ENCODE measurements at regions of chr7 and their contacts with region 1.

Region 1: DNA sequence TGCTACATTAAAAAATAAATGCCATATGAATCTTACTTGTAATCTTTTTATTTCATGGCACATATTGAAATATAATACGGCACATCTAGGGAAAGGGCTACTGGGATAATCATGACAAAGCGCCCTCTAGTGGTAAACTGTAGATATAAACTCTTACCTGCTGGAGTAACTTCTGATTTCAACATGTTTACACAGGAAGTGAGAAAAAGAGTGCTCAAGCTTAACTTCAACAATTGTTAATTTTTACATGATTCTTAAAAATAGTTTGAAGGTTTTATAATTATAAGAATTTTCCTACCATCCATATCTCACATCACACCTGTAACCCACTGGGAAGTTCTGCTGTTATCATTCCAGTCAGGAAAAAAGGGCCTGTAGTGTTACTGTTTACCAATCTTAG is 2.0 kb upstream of the HEPACAM2 start:
- H3K4me3 ChIP-seq: no peak overlapping the region
- H3K27ac ChIP-seq: no peak overlapping the region
- H3K4me1 ChIP-seq: no peaks in the 10 kb centered on the region
- CTCF ChIP-seq: 0 out of 2 replicates have a peak, but pooled peaks have one; percentile 14

Region 2: DNA sequence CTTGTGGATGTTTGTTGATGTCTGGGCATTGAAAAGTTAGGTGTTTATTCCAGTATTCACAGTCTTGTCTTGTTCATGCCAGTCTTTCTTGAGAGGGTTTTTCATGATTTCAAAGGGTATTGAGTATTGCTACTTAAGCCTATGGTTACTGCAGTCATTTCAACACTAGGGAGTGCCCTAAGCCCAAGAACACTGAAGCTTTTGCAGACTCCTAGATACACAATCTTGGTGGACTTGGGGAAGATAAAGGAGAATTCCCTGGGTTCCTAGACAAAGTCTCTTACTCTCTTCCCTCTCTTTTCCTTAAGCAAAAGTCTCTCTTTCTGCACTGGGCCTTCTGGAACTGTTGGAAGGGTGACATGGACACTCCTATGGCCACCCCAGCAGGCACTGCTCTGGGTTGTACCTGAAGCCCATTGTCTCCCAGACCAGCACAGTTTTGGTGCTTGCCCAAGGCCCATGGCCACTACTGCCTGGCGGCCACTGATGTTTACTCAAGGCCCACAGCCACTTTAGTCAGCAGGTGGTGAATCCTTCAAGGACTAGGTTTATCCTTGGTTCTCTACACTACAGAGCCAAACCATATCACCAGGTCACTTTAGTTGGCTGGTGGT is 135.4 kb before region 1 on chr7:
- CTCF ChIA-PET with region 1: interaction called, 12 read pairs
- POLR2A ChIA-PET with region 1: no interaction called
- H3K4me3 ChIP-seq: no peak overlapping the region
- H3K27ac ChIP-seq: no peak overlapping the region
- H3K4me1 ChIP-seq: no peaks in the 10 kb centered on the region
- CTCF ChIP-seq: no peak

Measured in HEK293 (cell line).